ENCODE measurements at regions of chr20 and their contacts with region 1.

Region 1: DNA sequence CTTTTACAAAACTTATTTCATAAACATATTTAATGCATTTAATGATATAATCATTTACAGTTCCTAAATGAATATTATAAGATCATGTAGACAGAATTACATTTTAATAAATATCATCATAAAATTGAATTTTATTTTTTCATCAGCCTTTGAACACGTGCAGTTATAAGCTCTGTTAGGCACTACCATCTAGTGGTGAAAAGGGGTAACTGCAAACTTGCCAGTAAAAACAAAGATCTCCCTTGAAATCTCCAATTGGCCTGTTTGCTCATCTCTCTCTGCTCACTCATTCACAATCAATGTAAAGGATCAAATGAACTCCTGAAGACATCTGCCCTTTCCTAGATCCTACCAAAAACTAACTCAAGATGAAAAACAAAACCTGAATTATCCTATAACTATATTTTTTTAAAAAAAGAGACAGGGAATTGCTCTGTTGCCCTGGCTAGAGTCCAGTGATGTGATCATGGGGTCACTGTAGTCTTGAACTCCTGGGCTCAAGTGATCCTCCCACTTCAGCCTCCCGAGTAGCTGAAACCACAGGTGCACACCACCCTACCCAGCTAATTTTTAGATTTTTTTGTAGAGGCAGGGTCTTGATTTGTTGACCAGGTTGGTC is 31.7 kb downstream of the SAMHD1 start:
- DNase-seq: peak; percentile 35
- ATAC-seq: peak; percentile 77
- H3K4me3 Mint-ChIP-seq: no peak overlapping the region
- H3K27ac Mint-ChIP-seq: peak overlapping the region; percentile 82
- H3K4me1 Mint-ChIP-seq: peaks cover 20% of the 10 kb centered on the region
- H3K27me3 Mint-ChIP-seq: no peaks in the 10 kb centered on the region

Region 2: DNA sequence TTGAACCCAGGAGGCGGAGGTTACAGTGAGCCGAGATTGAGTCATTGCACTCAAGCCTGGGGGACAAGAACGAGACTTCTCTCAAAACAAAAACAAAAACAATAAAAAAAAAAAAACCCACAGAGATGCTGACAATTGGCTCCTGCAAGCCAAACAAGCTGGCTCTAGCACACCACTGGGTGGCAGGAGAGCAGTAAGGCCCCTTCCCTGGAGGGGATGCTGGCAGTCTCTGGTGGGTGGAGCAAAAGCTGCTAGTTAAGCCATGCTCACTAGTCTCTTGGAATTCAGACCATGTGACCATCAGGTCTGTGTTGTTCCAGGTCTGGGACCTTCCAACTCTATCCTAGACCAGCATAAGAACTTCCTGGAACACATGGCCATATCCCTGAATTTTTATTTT is 127.4 kb before region 1 on chr20:
- CTCF ChIA-PET with region 1: no interaction called
- POLR2A ChIA-PET with region 1: no interaction called
- intact Hi-C with region 1: no loop called
- DNase-seq: peak; percentile 35
- ATAC-seq: no peak
- H3K4me3 Mint-ChIP-seq: no peak overlapping the region
- H3K27ac Mint-ChIP-seq: no peak overlapping the region
- H3K4me1 Mint-ChIP-seq: no peaks in the 10 kb centered on the region
- H3K27me3 Mint-ChIP-seq: no peaks in the 10 kb centered on the region

Region 3: DNA sequence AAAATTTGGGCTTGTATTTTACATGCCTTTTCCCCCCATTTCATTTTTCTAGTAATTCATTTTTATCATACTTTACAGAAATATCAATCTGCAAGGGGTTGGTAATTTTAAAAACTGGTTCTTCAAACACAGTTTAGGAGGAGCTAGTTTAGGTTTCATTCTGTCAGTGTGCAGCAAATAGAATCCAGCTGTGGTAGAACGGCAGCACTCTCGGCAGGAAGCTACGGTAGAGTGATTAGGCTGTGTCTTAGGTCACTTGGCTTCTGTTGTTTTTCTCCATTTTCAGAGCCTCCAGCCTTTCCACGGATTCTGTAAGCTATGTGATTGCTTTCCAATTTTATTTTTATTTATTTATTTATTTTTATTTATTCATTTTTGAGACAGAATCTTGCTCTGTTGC is 11.2 kb before region 1 on chr20:
- CTCF ChIA-PET with region 1: interaction called, 25 read pairs
- POLR2A ChIA-PET with region 1: no interaction called
- intact Hi-C with region 1: no loop called
- DNase-seq: no peak
- ATAC-seq: no peak
- H3K4me3 Mint-ChIP-seq: no peak overlapping the region
- H3K27ac Mint-ChIP-seq: no peak overlapping the region
- H3K4me1 Mint-ChIP-seq: peaks cover 9% of the 10 kb centered on the region
- H3K27me3 Mint-ChIP-seq: no peaks in the 10 kb centered on the region

Region 4: GRCh38 chr20:36932476-36933426 is 12.9 kb after region 1 on chr20:
- CTCF ChIA-PET with region 1: interaction called, 10 read pairs
- POLR2A ChIA-PET with region 1: interaction called, 3 read pairs
- intact Hi-C with region 1: no loop called
- DNase-seq: no peak
- ATAC-seq: no peak
- H3K4me3 Mint-ChIP-seq: no peak overlapping the region
- H3K27ac Mint-ChIP-seq: peak overlapping the region; percentile 17
- H3K4me1 Mint-ChIP-seq: peaks cover 57% of the 10 kb centered on the region
- H3K27me3 Mint-ChIP-seq: no peaks in the 10 kb centered on the region

Measured in activated CD4-positive, alpha-beta T cell treated with anti-CD3 and anti-CD28 coated beads for 36 hours (primary cell).